HEK293 (cell line): ENCODE measurements at regions of chr11 and their contacts with region 1.

Region 1: GRCh38 chr11:112588252-112588694 is 327.6 kb upstream of the PLET1 start:
- H3K4me3 ChIP-seq: no peak overlapping the region
- H3K27ac ChIP-seq: no peak overlapping the region
- H3K4me1 ChIP-seq: no peaks in the 10 kb centered on the region
- CTCF ChIP-seq: no peak

Region 2: DNA sequence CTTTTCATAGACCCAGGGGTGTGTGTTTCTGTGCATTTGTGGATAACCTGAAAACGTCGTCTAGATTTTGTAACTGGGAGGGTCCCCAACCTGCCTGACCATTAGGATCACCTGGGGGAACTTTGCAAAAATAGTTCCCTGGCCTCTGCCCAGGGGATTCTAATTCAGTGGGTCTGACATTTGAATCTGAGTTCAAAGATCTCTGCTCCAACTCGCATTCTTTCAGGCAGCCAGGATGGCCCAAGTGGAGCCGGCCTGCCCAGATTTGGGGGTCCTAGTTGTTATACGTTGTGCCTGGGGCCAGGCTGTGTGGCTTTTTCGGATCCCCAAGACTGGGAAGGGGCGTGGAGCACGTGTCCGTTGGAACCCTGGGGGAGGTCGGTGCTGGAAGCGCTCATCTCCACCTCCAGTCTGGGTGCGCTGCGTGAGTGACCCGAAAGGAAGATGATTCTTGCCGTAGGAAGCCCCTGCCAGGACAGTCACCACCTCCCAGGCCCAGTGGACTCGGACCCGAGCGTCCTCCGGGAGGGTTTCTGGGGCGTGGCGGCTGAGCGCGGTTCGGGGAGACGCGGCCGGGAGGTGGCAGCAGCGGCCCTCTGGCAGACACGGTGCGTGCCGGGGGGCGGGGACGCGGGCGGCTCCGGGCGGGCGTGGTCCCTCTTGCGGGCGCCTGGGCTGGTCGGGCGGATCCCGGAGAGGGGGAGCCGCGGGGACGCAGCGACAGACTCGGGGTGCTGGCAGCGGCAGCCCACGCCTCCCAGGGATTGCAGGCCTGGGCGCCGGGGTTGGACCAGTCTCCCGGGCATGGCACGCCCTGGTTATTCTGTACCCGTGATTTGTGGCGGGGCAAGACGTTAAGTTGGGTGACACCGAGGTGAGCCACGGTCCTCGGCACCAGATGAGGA is 298.4 kb before region 1 on chr11:
- CTCF ChIA-PET with region 1: interaction called, 10 read pairs
- POLR2A ChIA-PET with region 1: no interaction called
- H3K4me3 ChIP-seq: peak overlapping the region; percentile 53
- H3K27ac ChIP-seq: no peak overlapping the region
- H3K4me1 ChIP-seq: no peaks in the 10 kb centered on the region; the same call in 1 of the 2 replicates
- CTCF ChIP-seq: peak; percentile 66

Region 3: DNA sequence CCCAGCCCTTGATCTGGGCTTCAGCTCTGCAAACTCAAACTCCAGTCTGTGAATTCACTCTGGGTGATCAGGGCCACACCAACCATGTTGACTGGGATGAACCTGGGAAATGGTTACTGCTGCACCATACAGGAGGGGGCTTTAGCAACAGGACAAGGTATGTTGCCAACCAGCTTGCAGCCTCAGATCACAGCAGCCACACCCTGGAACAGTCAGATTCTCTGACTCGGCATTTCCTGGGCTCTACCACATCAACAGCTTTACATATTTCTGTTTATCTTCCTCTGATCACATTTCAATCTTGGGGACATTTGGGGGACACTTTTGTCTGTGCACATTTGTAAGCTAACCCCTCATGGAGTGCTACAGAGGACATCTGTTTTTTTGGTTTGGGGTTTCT is 106.0 kb after region 1 on chr11:
- CTCF ChIA-PET with region 1: no interaction called
- POLR2A ChIA-PET with region 1: no interaction called
- H3K4me3 ChIP-seq: no peak overlapping the region
- H3K27ac ChIP-seq: no peak overlapping the region
- H3K4me1 ChIP-seq: no peaks in the 10 kb centered on the region
- CTCF ChIP-seq: no peak

Region 4: GRCh38 chr11:112784323-112785073 is 196.2 kb after region 1 on chr11:
- CTCF ChIA-PET with region 1: interaction called, 12 read pairs
- POLR2A ChIA-PET with region 1: interaction called, 8 read pairs
- H3K4me3 ChIP-seq: peak overlapping the region; percentile 33
- H3K27ac ChIP-seq: no peak overlapping the region
- H3K4me1 ChIP-seq: no peaks in the 10 kb centered on the region
- CTCF ChIP-seq: no peak

Region 5: DNA sequence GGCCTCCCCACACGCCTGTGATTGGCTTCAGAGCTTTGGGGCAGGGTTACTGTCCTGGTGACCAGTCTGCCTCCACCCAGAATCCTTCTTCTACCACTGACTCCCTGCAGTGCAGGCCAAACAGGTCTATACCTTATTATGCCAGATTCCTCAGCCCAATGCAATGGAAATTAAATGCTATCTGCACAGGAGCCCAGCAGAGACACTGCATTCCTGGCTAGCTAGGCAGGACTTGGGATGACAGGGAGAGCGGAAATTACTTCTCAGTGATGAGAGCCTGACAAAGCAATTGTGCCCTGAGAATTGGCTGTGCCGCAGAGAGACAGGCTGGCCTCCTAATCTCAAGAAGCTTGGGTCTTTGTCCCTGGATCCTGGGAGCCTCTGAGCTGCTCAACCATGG is 229.1 kb after region 1 on chr11:
- CTCF ChIA-PET with region 1: no interaction called
- POLR2A ChIA-PET with region 1: no interaction called
- H3K4me3 ChIP-seq: no peak overlapping the region
- H3K27ac ChIP-seq: no peak overlapping the region
- H3K4me1 ChIP-seq: no peaks in the 10 kb centered on the region
- CTCF ChIP-seq: no peak

Region 6: DNA sequence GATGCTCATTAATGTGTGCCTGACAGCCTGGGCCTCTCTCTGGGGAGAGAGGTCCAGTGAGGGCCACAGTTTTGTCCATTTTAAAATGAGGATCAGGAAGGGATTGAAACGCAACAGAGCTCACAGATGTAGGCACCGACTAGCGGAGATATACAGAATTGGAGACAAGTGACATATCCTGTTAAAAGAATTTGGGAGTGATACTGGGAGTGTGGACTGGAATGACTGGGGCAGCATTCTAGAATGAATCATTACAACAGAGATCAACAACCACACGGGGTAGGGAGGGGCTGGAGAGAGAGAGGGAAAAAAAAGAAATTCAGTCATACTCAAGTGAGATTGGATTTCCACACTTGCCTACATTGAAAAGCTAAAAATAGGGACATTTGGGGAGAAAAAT is 370.4 kb after region 1 on chr11:
- CTCF ChIA-PET with region 1: interaction called, 13 read pairs
- POLR2A ChIA-PET with region 1: interaction called, 3 read pairs
- H3K4me3 ChIP-seq: no peak overlapping the region
- H3K27ac ChIP-seq: no peak overlapping the region
- H3K4me1 ChIP-seq: no peaks in the 10 kb centered on the region
- CTCF ChIP-seq: no peak

Region 7: DNA sequence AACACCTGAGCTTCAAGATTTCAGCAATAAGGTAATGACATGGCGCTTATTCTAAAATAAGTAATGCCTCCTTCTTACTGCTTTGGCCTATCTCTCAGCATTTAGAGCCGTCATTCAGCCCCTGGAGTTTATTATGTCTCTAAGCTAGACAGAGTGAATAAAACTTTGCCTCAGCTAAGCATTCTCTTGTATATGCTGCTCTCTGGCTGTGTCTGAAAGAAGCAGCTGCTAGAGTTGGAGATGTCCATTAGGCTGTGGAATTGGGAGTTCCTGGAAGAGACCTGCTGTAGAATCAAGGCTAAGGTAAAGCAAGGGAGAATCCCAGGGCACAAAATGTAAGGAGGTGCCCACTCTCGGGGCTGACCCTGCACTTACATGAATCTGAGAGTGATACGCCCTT is 690.7 kb after region 1 on chr11:
- CTCF ChIA-PET with region 1: interaction called, 11 read pairs
- POLR2A ChIA-PET with region 1: no interaction called
- H3K4me3 ChIP-seq: no peak overlapping the region
- H3K27ac ChIP-seq: no peak overlapping the region
- H3K4me1 ChIP-seq: no peaks in the 10 kb centered on the region
- CTCF ChIP-seq: no peak